ENCODE measurements at regions of chr1 and their contacts with region 1.

Region 1: GRCh38 chr1:40476924-40477677 is at the start of gene ZFP69:
- DNase-seq: peak; percentile 60 to 72 (median 67)
- H3K4me3 ChIP-seq: peak within 1 kb of the TSS; percentile 61 to 70
- H3K4me3 Mint-ChIP-seq: peak within 1 kb of the TSS; percentile 88 to 97 (median 93)
- H3K27ac ChIP-seq: peak within 1 kb of the TSS; percentile 52
- H3K27ac Mint-ChIP-seq: peak within 1 kb of the TSS; percentile 85 to 91 (median 88)
- H3K4me1 ChIP-seq: peaks cover 13% of the 10 kb centered on the region
- H3K4me1 Mint-ChIP-seq: peaks cover 16 to 26% (median 22%) of the 10 kb centered on the region in 4 donors
- H3K27me3 ChIP-seq: no peaks in the 10 kb centered on the region
- H3K27me3 Mint-ChIP-seq: no peaks in the 10 kb centered on the region
- total RNA-seq, gene ZFP69: 3.3 to 4.3 TPM

Region 2: GRCh38 chr1:40411294-40411693 is 65.8 kb before region 1 on chr1:
- CTCF ChIA-PET with region 1: no interaction called
- POLR2A ChIA-PET with region 1: no interaction called
- intact Hi-C with region 1: no loop called
- DNase-seq: no peak
- H3K4me3 ChIP-seq: no peak overlapping the region
- H3K4me3 Mint-ChIP-seq: no peak overlapping the region
- H3K27ac ChIP-seq: no peak overlapping the region
- H3K27ac Mint-ChIP-seq: peak overlapping the region in 2 of 7 donors; percentile 46
- H3K4me1 ChIP-seq: no peaks in the 10 kb centered on the region
- H3K4me1 Mint-ChIP-seq: peaks cover 13 to 48% (median 27%) of the 10 kb centered on the region in 4 donors
- H3K27me3 ChIP-seq: no peaks in the 10 kb centered on the region
- H3K27me3 Mint-ChIP-seq: no peaks in the 10 kb centered on the region

Region 3: DNA sequence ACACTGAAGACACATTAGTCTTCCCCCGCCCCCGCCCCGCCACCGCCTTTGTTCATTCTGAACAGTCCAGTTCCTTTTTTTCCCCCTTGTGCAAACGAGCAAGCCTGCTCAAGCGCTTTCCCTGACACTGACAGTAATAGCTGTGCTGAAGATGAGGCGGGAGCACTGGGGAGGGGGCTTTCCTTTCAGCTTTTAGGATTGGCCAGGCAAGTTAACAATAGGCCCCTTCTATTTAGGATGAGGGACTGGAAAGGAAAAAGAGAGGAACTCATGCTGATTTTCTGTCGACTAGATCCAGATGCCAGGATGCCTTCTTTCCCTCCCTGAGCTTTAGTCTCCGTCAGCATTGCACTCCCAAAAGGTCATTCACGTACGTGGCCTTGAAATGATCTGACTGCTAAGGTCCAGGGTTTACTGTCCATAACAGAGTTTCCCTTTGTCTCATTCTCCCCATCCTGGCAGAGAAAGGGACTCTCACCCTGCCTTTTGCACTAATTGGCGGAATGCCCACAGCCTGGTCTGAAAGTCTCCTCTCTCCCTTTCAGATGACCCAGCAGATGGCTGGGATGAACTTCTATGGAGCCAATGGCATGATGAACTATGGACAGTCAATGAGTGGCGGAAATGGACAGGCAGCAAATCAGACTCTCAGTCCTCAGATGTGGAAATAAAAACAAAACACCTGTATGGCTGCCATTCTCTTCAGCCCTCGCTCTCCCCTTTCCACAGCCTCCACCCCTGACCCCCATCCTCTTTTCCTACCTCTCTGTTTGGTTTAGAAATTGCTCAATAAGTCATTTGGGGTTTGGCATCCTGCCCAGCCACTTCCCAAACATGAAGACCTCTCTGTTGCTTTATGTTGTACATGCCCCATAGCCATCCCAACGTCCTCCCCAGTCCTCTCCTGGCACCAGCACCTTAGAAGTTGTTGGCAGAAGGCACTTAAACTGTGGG is 55.4 kb before region 1 on chr1:
- CTCF ChIA-PET with region 1: no interaction called
- POLR2A ChIA-PET with region 1: no interaction called
- intact Hi-C with region 1: no loop called
- DNase-seq: no peak
- H3K4me3 ChIP-seq: no peak overlapping the region
- H3K4me3 Mint-ChIP-seq: no peak overlapping the region
- H3K27ac ChIP-seq: no peak overlapping the region
- H3K27ac Mint-ChIP-seq: peak overlapping the region in 3 of 7 donors; percentile 27 to 77 (median 49)
- H3K4me1 ChIP-seq: no peaks in the 10 kb centered on the region
- H3K4me1 Mint-ChIP-seq: peaks cover 6 to 16% (median 10%) of the 10 kb centered on the region in 4 donors
- H3K27me3 ChIP-seq: no peaks in the 10 kb centered on the region
- H3K27me3 Mint-ChIP-seq: no peaks in the 10 kb centered on the region

Region 4: GRCh38 chr1:40531381-40532061 is 54.4 kb after region 1 on chr1 and contains the start of gene ZNF684:
- CTCF ChIA-PET with region 1: no interaction called
- POLR2A ChIA-PET with region 1: interaction called, 11 read pairs
- intact Hi-C with region 1: no loop called
- DNase-seq: peak; percentile 82 to 92 (median 84)
- H3K4me3 ChIP-seq: peak within 1 kb of the TSS; percentile 19 to 90
- H3K4me3 Mint-ChIP-seq: peak within 1 kb of the TSS; percentile 94 to 100 (median 98)
- H3K27ac ChIP-seq: peak within 1 kb of the TSS; percentile 65
- H3K27ac Mint-ChIP-seq: peak within 1 kb of the TSS; percentile 84 to 100 (median 96)
- H3K4me1 ChIP-seq: peaks cover 21% of the 10 kb centered on the region
- H3K4me1 Mint-ChIP-seq: peaks cover 20 to 26% (median 23%) of the 10 kb centered on the region in 4 donors
- H3K27me3 ChIP-seq: no peaks in the 10 kb centered on the region
- H3K27me3 Mint-ChIP-seq: peaks cover 5 to 6% of the 10 kb centered on the region in 2 donors
- total RNA-seq, gene ZNF684: 4.4 to 5.5 TPM

Region 5: GRCh38 chr1:40553017-40553416 is 75.9 kb after region 1 on chr1:
- CTCF ChIA-PET with region 1: no interaction called
- POLR2A ChIA-PET with region 1: no interaction called
- intact Hi-C with region 1: no loop called
- DNase-seq: no peak
- H3K4me3 ChIP-seq: no peak overlapping the region
- H3K4me3 Mint-ChIP-seq: no peak overlapping the region
- H3K27ac ChIP-seq: no peak overlapping the region
- H3K27ac Mint-ChIP-seq: no peak overlapping the region
- H3K4me1 ChIP-seq: no peaks in the 10 kb centered on the region
- H3K4me1 Mint-ChIP-seq: no peaks in the 10 kb centered on the region
- H3K27me3 ChIP-seq: no peaks in the 10 kb centered on the region
- H3K27me3 Mint-ChIP-seq: peaks cover 2 to 4% of the 10 kb centered on the region in 2 donors